PC-9 (cell line): ENCODE measurements at regions of chr16 and their contacts with region 1.

Region 1: DNA sequence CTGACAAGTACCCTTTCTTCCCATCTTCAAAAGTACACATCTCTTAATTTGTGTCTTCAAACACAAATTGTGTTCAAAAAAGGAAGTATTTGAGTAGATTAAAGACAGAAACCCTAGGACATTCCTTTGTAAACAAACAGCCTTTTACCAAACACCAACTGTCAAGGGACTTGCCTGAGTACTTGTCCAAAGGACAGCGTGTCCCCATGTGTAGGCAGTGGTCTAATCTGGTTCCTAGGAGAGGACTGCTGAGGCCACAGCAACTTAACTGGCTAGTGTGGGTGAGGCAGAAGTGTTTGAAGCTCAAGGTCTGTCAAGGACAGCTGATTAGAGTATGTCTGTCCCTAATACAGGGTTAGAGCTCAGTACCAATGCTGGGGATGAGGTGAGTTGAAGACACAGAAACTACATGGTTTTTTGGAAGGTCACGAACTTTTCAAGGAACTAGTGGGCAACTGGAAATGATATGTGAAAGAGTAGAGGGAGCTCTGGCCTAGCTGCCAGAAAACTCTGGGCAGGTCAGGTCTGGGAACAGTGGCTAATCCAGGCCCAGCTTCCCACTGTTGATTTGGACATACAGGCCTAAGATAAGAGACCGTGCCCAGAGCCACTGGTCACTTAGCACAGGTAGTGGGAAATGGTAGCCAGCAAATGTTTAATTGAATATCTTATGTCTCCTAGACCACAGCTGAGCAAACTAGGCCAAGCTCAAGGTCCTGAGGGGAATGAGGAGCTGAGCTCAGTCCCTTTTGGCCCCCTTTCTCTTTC is 10.1 kb downstream of the HMOX2 start:
- DNase-seq: no peak
- H3K4me3 ChIP-seq: no peak overlapping the region
- H3K27ac ChIP-seq: no peak overlapping the region
- H3K4me1 ChIP-seq: no peaks in the 10 kb centered on the region
- H3K27me3 ChIP-seq: no peaks in the 10 kb centered on the region
- CTCF ChIP-seq: no peak

Region 2: DNA sequence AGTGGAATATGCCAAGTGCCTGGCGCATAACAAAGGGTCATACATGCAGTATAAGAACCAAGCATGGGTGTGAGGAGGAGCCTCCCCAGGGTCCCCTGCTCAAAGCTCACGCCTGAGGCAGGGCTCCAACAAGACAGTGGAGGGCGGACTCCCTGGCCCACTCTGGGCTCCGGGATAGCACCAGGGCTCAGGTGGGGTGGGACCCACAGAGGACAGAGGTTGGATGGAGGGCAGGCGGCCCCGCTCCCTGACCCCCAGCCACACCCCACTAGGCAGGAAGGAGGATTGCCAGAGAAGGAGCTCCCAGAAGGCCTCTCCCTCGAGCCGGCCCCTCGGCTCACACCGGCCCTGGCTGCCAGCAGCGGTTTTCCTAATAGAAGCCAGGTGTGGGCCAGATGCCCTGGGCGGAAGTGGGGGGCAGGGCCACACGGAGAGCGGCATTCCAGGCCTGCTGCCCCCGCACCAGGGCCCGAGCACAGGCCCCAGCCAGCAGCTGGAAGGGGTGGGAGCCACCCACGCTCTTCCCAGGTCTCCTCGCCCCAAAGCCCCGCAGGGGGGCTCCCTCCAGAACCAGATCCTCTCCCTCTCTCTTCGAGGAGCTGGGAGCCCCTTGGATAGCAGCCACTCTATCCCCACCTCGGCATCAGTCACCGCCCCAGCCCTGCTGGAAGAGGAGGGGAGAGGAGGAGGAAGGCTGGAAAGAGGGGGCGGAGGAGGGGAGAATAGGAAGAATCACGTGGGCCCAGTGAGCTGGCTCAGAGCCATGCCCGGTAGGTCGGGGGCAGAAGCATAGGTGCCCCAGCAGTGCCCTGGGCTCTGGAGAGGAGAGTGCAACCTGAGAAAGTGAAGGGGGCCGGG is 93.7 kb before region 1 on chr16:
- CTCF ChIA-PET with region 1: no interaction called
- POLR2A ChIA-PET with region 1: no interaction called
- intact Hi-C with region 1: no loop called
- DNase-seq: peak in 1 of 2 experiments; percentile 90
- H3K4me3 ChIP-seq: no peak overlapping the region
- H3K27ac ChIP-seq: peak overlapping the region; percentile 90
- H3K4me1 ChIP-seq: peaks cover 28% of the 10 kb centered on the region
- H3K27me3 ChIP-seq: no peaks in the 10 kb centered on the region
- CTCF ChIP-seq: no peak

Region 3: GRCh38 chr16:4599037-4599436 is 112.7 kb after region 1 on chr16:
- CTCF ChIA-PET with region 1: interaction called, 14 read pairs
- POLR2A ChIA-PET with region 1: no interaction called
- intact Hi-C with region 1: no loop called
- DNase-seq: no peak
- H3K4me3 ChIP-seq: no peak overlapping the region
- H3K27ac ChIP-seq: no peak overlapping the region
- H3K4me1 ChIP-seq: no peaks in the 10 kb centered on the region
- H3K27me3 ChIP-seq: peaks cover 54% of the 10 kb centered on the region
- CTCF ChIP-seq: no peak